HEK293 (cell line): ENCODE measurements at regions of chr14 and their contacts with region 1.

Region 1: DNA sequence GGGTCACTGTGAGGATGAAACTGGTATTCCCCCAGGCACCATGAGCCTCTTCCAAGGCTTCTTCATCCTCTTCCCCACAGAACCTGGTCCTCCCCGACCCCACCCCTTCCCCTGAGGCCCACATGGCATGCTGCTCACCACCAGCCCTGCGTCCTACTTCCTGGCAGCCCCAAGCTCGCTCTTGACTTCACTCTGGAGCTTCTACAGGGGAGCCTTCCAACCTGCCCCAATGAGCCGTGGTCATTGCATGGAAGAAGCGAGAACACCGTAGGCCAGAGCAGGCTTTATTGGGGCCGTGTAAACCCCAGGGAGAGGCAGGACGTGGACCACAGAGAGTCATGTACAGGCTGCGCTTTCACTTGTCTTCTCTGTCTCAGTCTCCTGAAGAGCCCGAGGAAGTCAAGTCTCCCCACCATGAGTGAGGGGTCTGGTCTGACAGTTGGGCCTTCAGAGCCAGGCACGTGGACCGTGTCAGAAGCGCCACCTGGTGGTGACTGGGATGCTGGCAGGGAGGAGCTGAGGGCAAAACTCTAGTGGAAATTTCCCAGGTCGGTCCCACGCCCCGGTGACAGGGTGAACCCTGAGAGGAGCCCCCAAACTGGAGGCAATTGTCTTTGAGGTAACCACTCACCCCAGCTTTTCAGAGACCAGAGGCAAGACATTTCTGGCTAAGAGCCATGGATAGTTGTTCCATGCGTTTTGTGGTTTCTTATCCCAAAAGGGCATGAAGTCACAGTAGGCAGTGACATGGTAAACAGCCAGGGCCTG is 17.5 kb downstream of the RPS6KL1 start:
- H3K4me3 ChIP-seq: no peak overlapping the region
- H3K27ac ChIP-seq: no peak overlapping the region
- H3K4me1 ChIP-seq: no peaks in the 10 kb centered on the region
- CTCF ChIP-seq: peak; percentile 66

Region 2: DNA sequence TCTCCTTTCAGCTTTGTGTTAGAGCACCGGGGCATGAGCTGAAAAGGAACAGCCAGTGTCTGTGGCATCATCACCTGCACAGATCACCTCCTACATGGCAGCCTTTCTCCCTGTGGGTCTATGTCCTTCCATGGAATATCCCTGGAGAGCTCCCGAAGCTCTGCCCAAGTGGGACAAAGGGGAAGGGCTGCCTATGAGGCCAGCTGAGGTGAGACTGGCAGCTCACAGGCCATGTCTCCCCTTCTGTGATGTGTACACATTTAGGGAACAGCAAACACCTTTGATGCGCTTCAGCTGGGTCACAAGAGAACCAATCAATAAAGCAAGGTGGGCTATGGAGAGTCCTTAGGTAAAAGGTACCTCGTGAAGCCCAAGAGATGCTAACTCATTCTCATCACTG is 33.7 kb before region 1 on chr14:
- CTCF ChIA-PET with region 1: interaction called, 12 read pairs
- POLR2A ChIA-PET with region 1: no interaction called
- H3K4me3 ChIP-seq: no peak overlapping the region
- H3K27ac ChIP-seq: no peak overlapping the region
- H3K4me1 ChIP-seq: no peaks in the 10 kb centered on the region
- CTCF ChIP-seq: no peak

Region 3: DNA sequence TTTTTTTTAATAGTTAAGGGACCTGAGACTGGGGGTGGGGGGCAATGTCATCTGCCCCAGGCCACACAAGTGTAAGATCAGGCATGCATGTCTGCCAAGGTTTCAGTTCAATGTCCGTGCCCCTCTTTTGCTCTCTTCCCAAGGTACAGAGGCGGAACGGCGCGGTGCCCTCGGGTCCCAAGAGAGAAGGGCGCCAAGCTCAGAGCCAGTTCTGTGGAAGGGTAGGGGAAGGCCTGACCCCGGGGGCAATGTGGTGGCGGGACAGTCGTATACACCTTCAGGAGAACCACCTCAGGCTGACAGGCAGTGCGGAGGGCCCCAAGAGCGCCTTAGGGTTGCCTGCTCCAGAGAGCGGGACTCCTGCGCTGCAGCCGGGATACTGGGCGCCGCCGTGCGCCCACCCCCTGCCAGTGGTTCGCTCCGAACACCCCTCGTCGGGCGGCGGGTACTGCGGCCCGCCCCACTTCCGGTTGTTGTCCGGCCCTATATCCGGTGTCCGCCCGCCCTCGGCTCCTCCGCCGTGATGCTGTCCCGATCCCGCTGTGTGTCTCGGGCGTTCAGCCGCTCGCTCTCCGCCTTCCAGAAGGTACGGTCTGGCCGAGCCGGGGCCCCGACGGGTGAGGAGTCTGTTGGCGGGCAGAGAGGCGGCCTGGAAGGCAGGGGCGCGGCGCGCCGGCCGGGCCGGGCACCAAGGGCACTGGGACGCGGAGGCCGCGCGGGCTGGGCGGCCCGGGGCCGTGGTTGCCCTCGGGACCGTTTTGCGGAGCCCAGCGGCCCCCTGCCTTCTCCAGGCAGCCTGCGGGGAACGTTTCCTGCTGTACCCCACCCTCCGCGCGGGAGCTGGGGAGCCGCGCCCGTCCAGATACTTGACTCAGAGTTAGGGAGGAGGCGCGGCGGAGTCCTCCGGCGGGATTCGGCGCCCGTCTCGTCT is 23.9 kb before region 1 on chr14 and contains the start of gene DLST:
- CTCF ChIA-PET with region 1: interaction called, 19 read pairs
- POLR2A ChIA-PET with region 1: interaction called, 3 read pairs
- H3K4me3 ChIP-seq: peak within 1 kb of the TSS; percentile 90
- H3K27ac ChIP-seq: peak within 1 kb of the TSS; percentile 95
- H3K4me1 ChIP-seq: peaks cover 20% of the 10 kb centered on the region; the same call in 1 of the 2 replicates
- CTCF ChIP-seq: 0 out of 2 replicates have a peak, but pooled peaks have one; percentile 22

Region 4: GRCh38 chr14:74888164-74889158 is 17.1 kb before region 1 on chr14:
- CTCF ChIA-PET with region 1: interaction called, 64 read pairs
- POLR2A ChIA-PET with region 1: no interaction called
- H3K4me3 ChIP-seq: no peak overlapping the region
- H3K27ac ChIP-seq: peak overlapping the region; percentile 29
- H3K4me1 ChIP-seq: peaks cover 31% of the 10 kb centered on the region
- CTCF ChIP-seq: no peak

Region 5: GRCh38 chr14:74893614-74894091 is 11.9 kb before region 1 on chr14:
- CTCF ChIA-PET with region 1: interaction called, 64 read pairs
- POLR2A ChIA-PET with region 1: interaction called, 5 read pairs
- H3K4me3 ChIP-seq: no peak overlapping the region
- H3K27ac ChIP-seq: no peak overlapping the region
- H3K4me1 ChIP-seq: peaks cover 3% of the 10 kb centered on the region
- CTCF ChIP-seq: no peak

Region 6: GRCh38 chr14:74917646-74918081 is 12.1 kb after region 1 on chr14:
- CTCF ChIA-PET with region 1: interaction called, 14 read pairs
- POLR2A ChIA-PET with region 1: interaction called, 7 read pairs
- H3K4me3 ChIP-seq: no peak overlapping the region
- H3K27ac ChIP-seq: no peak overlapping the region
- H3K4me1 ChIP-seq: no peaks in the 10 kb centered on the region
- CTCF ChIP-seq: no peak